H1 (cell line): ENCODE measurements at regions of chr16 and their contacts with region 1.

Region 1: DNA sequence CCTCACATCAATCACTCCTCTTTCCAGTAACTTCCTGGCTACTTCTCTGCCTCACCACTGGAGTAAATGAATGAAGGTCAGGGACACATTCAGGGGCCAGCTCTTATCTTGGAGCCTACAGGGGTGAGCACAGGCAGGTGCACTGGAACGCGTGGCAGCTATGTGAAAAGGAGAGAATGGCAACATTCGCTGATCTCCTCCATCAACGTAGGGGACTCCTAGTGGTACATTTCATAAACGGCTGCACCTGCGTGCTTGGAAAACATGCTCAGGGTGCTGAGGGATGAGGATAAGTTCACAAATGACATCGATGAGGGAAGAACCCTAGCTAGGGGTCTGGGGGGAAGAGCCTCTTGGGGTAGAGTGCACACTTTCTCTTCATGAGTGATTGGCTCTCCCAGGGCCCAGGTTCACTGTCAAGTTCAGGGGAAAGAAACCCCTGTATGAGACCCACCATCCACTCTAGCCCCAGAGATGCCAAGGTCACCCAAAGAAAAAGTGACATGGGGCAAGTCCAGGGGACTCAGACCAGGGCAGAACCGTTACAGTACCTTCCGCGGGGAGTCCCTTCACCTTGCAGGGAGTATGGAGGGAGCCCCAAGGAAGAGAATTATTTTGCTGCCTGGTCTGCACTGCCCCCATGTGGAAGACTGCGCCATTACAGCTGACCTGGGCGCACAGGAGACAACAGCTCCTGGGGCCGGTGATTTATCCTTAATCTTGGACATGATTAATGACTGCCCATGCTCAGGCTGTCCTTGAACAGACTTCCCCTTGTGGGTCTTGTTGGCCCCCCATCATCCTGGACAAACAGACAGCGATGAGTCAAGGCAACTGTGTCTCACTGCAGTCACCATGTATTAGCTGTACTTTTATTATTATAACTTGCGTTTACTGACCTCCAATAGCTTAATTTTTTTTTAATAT is 30.1 kb downstream of the VAC14 start:
- DNase-seq: peak in 1 of 2 experiments; percentile 96
- H3K4me3 ChIP-seq: no peak overlapping the region
- H3K27ac ChIP-seq: no peak overlapping the region
- H3K4me1 ChIP-seq: no peaks in the 10 kb centered on the region
- H3K27me3 ChIP-seq: no peaks in the 10 kb centered on the region
- CTCF ChIP-seq: peak; percentile 95 to 97 (median 95)
- EP300 ChIP-seq: no peak
- POLR2A ChIP-seq: no peak
- RAD21 ChIP-seq: peak; percentile 93 to 95

Region 2: GRCh38 chr16:70661918-70662641 is 108.8 kb before region 1 on chr16:
- CTCF ChIA-PET with region 1: interaction called, 36 read pairs
- POLR2A ChIA-PET with region 1: no interaction called
- DNase-seq: no peak
- H3K4me3 ChIP-seq: no peak overlapping the region
- H3K27ac ChIP-seq: no peak overlapping the region
- H3K4me1 ChIP-seq: peaks cover 0 to 14% (median 7%) of the 10 kb centered on the region in 4 experiments; a peak in 6 of 7 replicates
- H3K27me3 ChIP-seq: no peaks in the 10 kb centered on the region
- CTCF ChIP-seq: no peak
- EP300 ChIP-seq: no peak
- POLR2A ChIP-seq: no peak
- RAD21 ChIP-seq: no peak

Region 3: GRCh38 chr16:70685938-70686375 is 84.9 kb before region 1 on chr16 and contains the start of gene MTSS2:
- CTCF ChIA-PET with region 1: interaction called, 141 read pairs
- POLR2A ChIA-PET with region 1: no interaction called
- DNase-seq: peak in 1 of 2 experiments; percentile 83
- H3K4me3 ChIP-seq: peak within 1 kb of the TSS; percentile 49 to 81 (median 65)
- H3K27ac ChIP-seq: no peak within 1 kb of the TSS
- H3K4me1 ChIP-seq: peaks cover 0 to 25% (median 14%) of the 10 kb centered on the region in 4 experiments; a peak in 6 of 7 replicates
- H3K27me3 ChIP-seq: peaks cover 0 to 8% (median 3%) of the 10 kb centered on the region in 4 experiments; a peak in 4 of 7 replicates
- CTCF ChIP-seq: no peak
- EP300 ChIP-seq: no peak
- POLR2A ChIP-seq: 0 out of 3 replicates have a peak, but pooled peaks of 1 of the 2 experiments have one; percentile 19
- RAD21 ChIP-seq: no peak
- total RNA-seq, gene MTSS2: 34.2 and 36.7 TPM in 2 replicates

Region 4: GRCh38 chr16:70715055-70715858 is 55.6 kb before region 1 on chr16:
- CTCF ChIA-PET with region 1: interaction called, 17 read pairs
- POLR2A ChIA-PET with region 1: no interaction called
- DNase-seq: no peak
- H3K4me3 ChIP-seq: no peak overlapping the region
- H3K27ac ChIP-seq: no peak overlapping the region
- H3K4me1 ChIP-seq: peaks cover 4 to 34% (median 22%) of the 10 kb centered on the region in 4 experiments
- H3K27me3 ChIP-seq: no peaks in the 10 kb centered on the region
- CTCF ChIP-seq: no peak
- EP300 ChIP-seq: no peak
- POLR2A ChIP-seq: no peak
- RAD21 ChIP-seq: no peak

Region 5: GRCh38 chr16:70737377-70738082 is 33.4 kb before region 1 on chr16:
- CTCF ChIA-PET with region 1: interaction called, 33 read pairs
- POLR2A ChIA-PET with region 1: no interaction called
- DNase-seq: no peak
- H3K4me3 ChIP-seq: no peak overlapping the region
- H3K27ac ChIP-seq: no peak overlapping the region
- H3K4me1 ChIP-seq: peaks cover 0 to 12% (median 6%) of the 10 kb centered on the region in 4 experiments; a peak in 6 of 7 replicates
- H3K27me3 ChIP-seq: no peaks in the 10 kb centered on the region
- CTCF ChIP-seq: no peak
- EP300 ChIP-seq: no peak
- POLR2A ChIP-seq: no peak
- RAD21 ChIP-seq: no peak

Region 6: GRCh38 chr16:70759666-70760065 is 11.2 kb before region 1 on chr16:
- CTCF ChIA-PET with region 1: interaction called, 57 read pairs
- POLR2A ChIA-PET with region 1: interaction called, 6 read pairs
- DNase-seq: no peak
- H3K4me3 ChIP-seq: no peak overlapping the region
- H3K27ac ChIP-seq: no peak overlapping the region
- H3K4me1 ChIP-seq: peaks cover 0 to 10% (median 2%) of the 10 kb centered on the region in 4 experiments; a peak in 2 of 7 replicates
- H3K27me3 ChIP-seq: no peaks in the 10 kb centered on the region
- CTCF ChIP-seq: peak; percentile 16 to 45 (median 22); a peak in 3 of 4 replicates
- EP300 ChIP-seq: no peak
- POLR2A ChIP-seq: no peak
- RAD21 ChIP-seq: peak in 1 of 2 experiments; percentile 23; a peak in 1 of 4 replicates